Left cardiac atrium (tissue), 4 donors: ENCODE measurements at regions of chr6 and their contacts with region 1.

Region 1: GRCh38 chr6:4125936-4126864 is 9.2 kb downstream of the ECI2 start:
- DNase-seq: no peak
- ATAC-seq: peak; percentile 38 to 91

Region 2: GRCh38 chr6:4055420-4056041 is 70.7 kb before region 1 on chr6:
- intact Hi-C with region 1: loop called (anchors 10 kb)
- DNase-seq: no peak
- ATAC-seq: peak; percentile 84 to 89

Region 3: GRCh38 chr6:4066029-4066755 is 60.0 kb before region 1 on chr6:
- intact Hi-C with region 1: loop called in 1 of 2 experiments (anchors 10 kb)
- DNase-seq: no peak
- ATAC-seq: no peak

Region 4: GRCh38 chr6:4093288-4093687 is 32.9 kb before region 1 on chr6:
- intact Hi-C with region 1: no loop called
- DNase-seq: no peak
- ATAC-seq: no peak

Region 5: DNA sequence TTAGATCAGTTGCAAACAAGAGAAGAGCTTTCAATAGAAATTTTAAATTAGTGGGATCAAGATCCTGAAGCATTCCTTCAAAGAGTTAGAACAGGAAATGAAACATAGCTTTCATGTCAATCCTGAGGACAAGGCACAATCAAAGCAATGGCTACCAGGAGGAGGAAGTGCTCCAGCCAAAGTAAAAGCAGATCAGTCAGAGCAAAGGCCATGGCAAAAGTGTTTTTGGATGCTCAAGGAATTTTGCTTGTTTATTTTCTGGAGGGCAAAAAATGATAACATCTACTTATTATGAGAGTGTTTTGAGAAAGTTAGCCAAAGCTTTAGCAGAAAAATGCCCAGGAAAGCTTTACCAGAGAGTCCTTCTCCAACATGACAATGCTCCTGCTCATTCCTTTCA is 70.2 kb after region 1 on chr6:
- intact Hi-C with region 1: no loop called
- DNase-seq: no peak
- ATAC-seq: no peak